Dorsolateral prefrontal cortex (tissue), 120 donors: ENCODE measurements at regions of chr20 and their contacts with region 1.

Region 1: GRCh38 chr20:34579191-34579978 is 20.9 kb downstream of the MAP1LC3A start:
- DNase-seq: peak; percentile 78 to 92 (median 88)
- H3K4me3 ChIP-seq: peak overlapping the region in 13 of 59 donors; percentile 1 to 36 (median 10)
- H3K27ac ChIP-seq: peak overlapping the region in 57 of 59 donors; percentile 39 to 97 (median 90)
- H3K27me3 ChIP-seq: no peaks in the 10 kb centered on the region
- CTCF ChIP-seq: peak; percentile 17 to 88 (median 73)

Region 2: GRCh38 chr20:34111702-34112599 is 467.4 kb before region 1 on chr20 and contains the start of gene EIF2S2:
- intact Hi-C with region 1: no loop called
- DNase-seq: peak; percentile 81 to 94 (median 90)
- H3K4me3 ChIP-seq: peak within 1 kb of the TSS; percentile 71 to 100 (median 97)
- H3K27ac ChIP-seq: peak within 1 kb of the TSS; percentile 49 to 98 (median 92)
- H3K27me3 ChIP-seq: no peaks in the 10 kb centered on the region
- CTCF ChIP-seq: peak in 30 of 56 donors; percentile 2 to 53 (median 24)
- total RNA-seq, gene EIF2S2: 20.5 to 39.5 (median 30.6) TPM

Region 3: GRCh38 chr20:34615477-34615876 is 36.1 kb after region 1 on chr20:
- intact Hi-C with region 1: loop called in 1 of 2 experiments (anchors 5 kb)
- DNase-seq: peak in 2 of 10 donors; percentile 47 to 56
- H3K4me3 ChIP-seq: peak overlapping the region in 2 of 59 donors; percentile 2 to 9
- H3K27ac ChIP-seq: peak overlapping the region; percentile 20 to 97 (median 84)
- H3K27me3 ChIP-seq: no peaks in the 10 kb centered on the region
- CTCF ChIP-seq: peak in 1 of 56 donors; percentile 25

Region 4: DNA sequence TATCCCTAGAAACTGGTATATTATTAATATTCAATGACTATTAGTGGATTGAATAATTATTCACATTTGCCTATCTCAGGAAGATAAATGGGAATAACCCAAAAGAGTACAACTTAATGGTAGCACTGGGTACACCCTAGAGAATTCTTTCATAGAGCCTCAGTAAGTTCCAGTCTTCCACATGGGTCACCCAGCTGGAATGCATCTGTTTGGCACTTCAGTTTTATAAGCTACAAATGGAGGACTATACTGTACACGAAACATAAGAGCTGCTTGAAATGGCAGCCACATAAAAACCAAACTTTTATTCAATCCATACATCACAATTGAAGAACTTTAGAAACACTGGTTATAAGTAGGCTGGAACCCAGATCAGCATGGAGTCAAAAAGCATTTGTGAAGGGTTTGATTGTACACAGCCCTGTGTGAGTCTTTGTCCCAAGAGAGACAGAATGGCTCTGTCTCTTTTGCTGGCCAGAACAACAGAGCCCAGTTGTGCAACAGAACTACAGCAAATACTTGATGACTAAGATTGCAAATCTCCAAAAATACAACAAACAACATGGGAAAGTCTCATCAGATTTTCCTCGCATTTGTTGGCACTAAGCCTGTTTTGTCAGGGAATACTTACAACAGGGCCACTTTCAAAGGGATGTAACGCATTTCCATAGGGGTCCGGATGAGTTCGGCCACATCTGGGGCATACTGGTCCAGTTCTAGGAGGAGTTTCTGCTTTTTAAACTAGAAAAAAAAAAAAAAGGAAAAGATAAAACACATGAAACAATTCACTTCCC is 58.1 kb after region 1 on chr20:
- intact Hi-C with region 1: loop called in 1 of 2 experiments (anchors 2 kb)
- DNase-seq: peak in 6 of 10 donors; percentile 51 to 81 (median 61)
- H3K4me3 ChIP-seq: peak overlapping the region in 4 of 59 donors; percentile 8 to 19 (median 12)
- H3K27ac ChIP-seq: peak overlapping the region; percentile 81 to 99 (median 95)
- H3K27me3 ChIP-seq: no peaks in the 10 kb centered on the region
- CTCF ChIP-seq: peak in 4 of 56 donors; percentile 8 to 25 (median 16)

Region 5: GRCh38 chr20:34768096-34768495 is 188.7 kb after region 1 on chr20:
- intact Hi-C with region 1: loop called (anchors 1 to 5 kb)
- DNase-seq: no peak
- H3K4me3 ChIP-seq: no peak overlapping the region
- H3K27ac ChIP-seq: peak overlapping the region in 5 of 59 donors; percentile 8 to 74 (median 48)
- H3K27me3 ChIP-seq: no peaks in the 10 kb centered on the region
- CTCF ChIP-seq: no peak